Adrenal gland (tissue), 19 donors: ENCODE measurements at regions of chr12 and their contacts with region 1.

Region 1: GRCh38 chr12:66087365-66087943 is 43.1 kb downstream of the LLPH start:
- DNase-seq: peak; percentile 58 to 91 (median 78)
- H3K4me3 ChIP-seq: no peak overlapping the region
- H3K27ac ChIP-seq: no peak overlapping the region
- H3K4me1 ChIP-seq: no peaks in the 10 kb centered on the region
- H3K27me3 ChIP-seq: peaks cover 4% of the 10 kb centered on the region
- CTCF ChIP-seq: peak; percentile 56 to 84 (median 80)
- POLR2A ChIP-seq: no peak

Region 2: DNA sequence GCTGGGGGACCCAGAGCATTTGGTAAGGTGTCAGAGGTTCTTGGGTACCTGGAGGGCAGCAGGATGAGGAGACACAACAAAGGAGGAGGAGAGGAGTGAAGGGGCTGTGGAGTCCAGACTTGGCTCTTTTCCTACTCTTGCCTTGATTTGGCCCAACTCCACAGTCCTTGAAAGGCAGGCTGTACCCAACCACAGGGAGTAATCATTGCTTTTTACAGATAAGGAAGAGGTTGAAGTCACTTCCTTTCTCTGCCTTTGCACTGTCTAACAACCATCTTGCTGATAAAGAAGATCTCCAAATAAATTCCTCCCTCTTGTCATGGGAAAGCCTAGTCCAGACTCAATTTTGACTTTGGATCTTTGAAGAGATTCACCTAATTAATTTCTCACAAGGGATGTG is 489.9 kb before region 1 on chr12:
- intact Hi-C with region 1: loop called in 1 of 2 experiments (anchors 10 kb)
- DNase-seq: no peak
- H3K4me3 ChIP-seq: no peak overlapping the region
- H3K27ac ChIP-seq: no peak overlapping the region
- H3K4me1 ChIP-seq: no peaks in the 10 kb centered on the region
- H3K27me3 ChIP-seq: peaks cover 8% of the 10 kb centered on the region
- CTCF ChIP-seq: no peak
- POLR2A ChIP-seq: no peak

Region 3: GRCh38 chr12:65673732-65674131 is 413.7 kb before region 1 on chr12:
- intact Hi-C with region 1: no loop called
- DNase-seq: no peak
- H3K4me3 ChIP-seq: no peak overlapping the region
- H3K27ac ChIP-seq: no peak overlapping the region
- H3K4me1 ChIP-seq: no peaks in the 10 kb centered on the region
- H3K27me3 ChIP-seq: peaks cover 5% of the 10 kb centered on the region
- CTCF ChIP-seq: no peak
- POLR2A ChIP-seq: no peak